GM12878 (cell line): ENCODE measurements at regions of chr11 and their contacts with region 1.

Region 1: DNA sequence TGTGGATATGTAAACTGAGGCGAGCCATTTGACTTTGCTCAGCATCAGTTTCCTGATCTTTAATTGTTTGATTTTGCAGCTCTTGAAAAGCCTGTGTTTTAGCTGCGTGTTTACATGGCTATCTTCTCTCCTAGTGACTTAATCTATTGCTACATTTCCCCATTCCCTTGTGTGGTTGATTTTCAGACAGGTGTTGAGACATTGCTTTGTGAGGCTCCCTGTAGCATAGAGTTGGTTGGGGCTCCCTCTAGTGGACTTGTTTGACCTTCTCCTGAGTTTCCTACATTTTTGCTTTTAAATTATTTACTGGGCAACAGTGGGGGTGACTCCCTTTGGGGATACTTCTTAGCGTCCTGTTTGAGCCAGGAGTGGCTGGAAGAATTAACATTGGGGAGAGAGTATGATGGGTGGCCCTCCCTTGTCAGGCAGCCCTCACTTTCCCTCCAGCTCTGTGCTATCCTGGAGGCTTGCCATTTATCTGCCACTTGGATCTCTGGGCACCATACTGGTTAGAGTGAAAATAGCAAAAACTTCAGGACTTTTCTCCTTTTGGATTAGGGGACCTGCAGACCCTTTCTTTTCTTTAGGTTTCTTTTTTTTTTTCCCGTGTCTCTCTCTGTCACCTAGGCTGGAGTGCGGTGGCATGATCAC is 9.2 kb upstream of the CBL start:
- DNase-seq: peak; percentile 59
- ATAC-seq: peak; percentile 97
- H3K4me3 ChIP-seq: no peak overlapping the region
- H3K27ac ChIP-seq: no peak overlapping the region
- H3K4me1 ChIP-seq: no peaks in the 10 kb centered on the region
- H3K27me3 ChIP-seq: 0 out of 4 replicates have a peak, but pooled peaks cover 0 to 2% of the 10 kb centered on the region in 2 experiments
- CTCF ChIP-seq: peak; percentile 75 to 92 (median 84)
- EP300 ChIP-seq: no peak
- POLR2A ChIP-seq: no peak
- RAD21 ChIP-seq: peak; percentile 92

Region 2: GRCh38 chr11:119144825-119145486 is 52.0 kb before region 1 on chr11:
- CTCF ChIA-PET with region 1: interaction called, 5 read pairs
- POLR2A ChIA-PET with region 1: no interaction called
- RAD21 ChIA-PET with region 1: no interaction called
- SMC1A ChIA-PET with region 1: interaction called, 9 read pairs
- in situ Hi-C with region 1: no loop called
- intact Hi-C with region 1: loop called (anchors 5 kb)
- DNase-seq: no peak
- ATAC-seq: peak; percentile 97
- H3K4me3 ChIP-seq: no peak overlapping the region
- H3K27ac ChIP-seq: no peak overlapping the region
- H3K4me1 ChIP-seq: no peaks in the 10 kb centered on the region
- H3K27me3 ChIP-seq: peaks cover 2 to 10% of the 10 kb centered on the region in 2 experiments; a peak in 3 of 4 replicates
- CTCF ChIP-seq: peak; percentile 50 to 71 (median 67)
- EP300 ChIP-seq: no peak
- POLR2A ChIP-seq: no peak
- RAD21 ChIP-seq: peak; percentile 52